Gastrocnemius medialis (tissue), 4 donors: ENCODE measurements at regions of chr17 and their contacts with region 1.

Region 1: DNA sequence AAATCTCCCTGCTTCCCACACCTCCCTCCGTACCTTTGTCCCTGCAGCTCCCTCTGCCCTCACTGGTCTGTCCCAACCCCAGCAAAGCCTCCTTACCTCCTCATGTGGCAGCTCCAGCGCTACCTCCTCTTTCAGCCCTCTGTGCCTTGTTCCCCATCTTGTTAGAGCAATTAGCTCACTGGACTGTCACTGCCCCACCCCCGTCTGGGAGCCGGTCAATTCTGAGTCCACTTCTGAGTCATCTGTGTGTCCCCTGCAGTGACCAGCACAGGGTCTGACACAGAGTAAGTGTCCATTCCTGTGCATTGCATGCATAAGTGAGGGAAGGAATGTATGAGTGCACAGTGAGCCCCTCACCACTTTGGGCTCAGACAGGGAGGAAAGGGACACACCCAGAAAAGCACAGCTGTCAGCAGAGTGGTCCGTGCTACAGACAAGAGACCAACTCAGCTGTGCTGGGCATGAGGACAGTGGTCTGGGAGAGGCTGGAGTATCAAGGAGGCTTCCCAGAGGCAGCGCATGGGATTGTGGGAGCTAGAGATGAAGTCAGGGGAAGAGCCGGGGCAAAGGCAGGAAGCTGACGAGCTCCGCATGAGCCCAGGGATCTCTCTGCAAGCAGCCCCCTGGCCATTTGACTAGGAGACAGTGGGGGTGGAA is 45.9 kb downstream of the PITPNM3 start:
- DNase-seq: no peak
- ATAC-seq: no peak
- H3K4me3 ChIP-seq: no peak overlapping the region
- H3K27ac ChIP-seq: no peak overlapping the region
- H3K4me1 ChIP-seq: no peaks in the 10 kb centered on the region
- H3K27me3 ChIP-seq: peaks cover 0 to 14% (median 4%) of the 10 kb centered on the region in 3 donors
- CTCF ChIP-seq: no peak
- POLR2A ChIP-seq: no peak

Region 2: DNA sequence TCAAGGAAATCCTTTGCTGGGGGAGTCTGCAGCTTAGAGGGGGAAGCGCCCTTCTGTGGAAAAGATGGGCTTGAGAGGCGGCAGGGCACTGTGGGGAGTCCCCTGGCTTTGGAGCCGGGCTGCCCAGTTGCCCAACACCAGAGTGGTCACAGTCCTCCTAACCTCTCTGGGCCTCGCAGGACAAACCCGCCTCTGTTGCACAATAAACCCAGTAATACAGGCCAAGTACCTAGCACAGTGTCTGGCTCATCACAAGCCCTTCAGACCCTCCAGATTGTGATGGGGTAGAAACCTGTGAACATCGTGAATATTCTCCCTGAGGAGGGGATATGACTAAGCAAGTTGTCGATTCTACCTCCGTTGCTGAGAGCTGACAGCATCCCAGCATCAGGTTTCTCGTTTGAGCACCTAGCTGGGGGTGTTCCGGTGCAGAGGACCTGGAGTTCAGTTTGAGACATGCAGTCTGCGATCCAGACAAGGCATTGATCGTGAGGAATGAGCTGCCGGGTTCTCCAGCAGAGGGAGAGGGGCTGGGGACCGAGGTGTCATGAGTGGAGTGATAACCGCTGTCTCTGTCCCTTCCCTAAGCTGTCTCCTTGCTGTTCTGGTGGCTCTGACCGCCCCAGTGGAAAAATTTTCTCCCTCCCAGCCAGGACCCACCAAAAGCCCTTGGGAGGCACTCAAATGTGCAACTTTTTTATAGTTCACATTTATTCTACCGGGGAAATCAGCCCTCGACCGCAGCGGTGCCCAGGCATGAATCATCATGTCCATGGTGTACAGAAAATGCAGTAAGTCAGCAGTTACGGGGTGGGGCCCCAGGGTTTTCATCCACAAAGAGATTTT is 278.3 kb before region 1 on chr17:
- in situ Hi-C with region 1: no loop called
- intact Hi-C with region 1: loop called (anchors 10 kb)
- DNase-seq: no peak
- ATAC-seq: no peak
- H3K4me3 ChIP-seq: no peak overlapping the region
- H3K27ac ChIP-seq: no peak overlapping the region
- H3K4me1 ChIP-seq: no peaks in the 10 kb centered on the region
- H3K27me3 ChIP-seq: peaks cover 0 to 8% (median 0%) of the 10 kb centered on the region in 3 donors
- CTCF ChIP-seq: no peak
- POLR2A ChIP-seq: no peak

Region 3: GRCh38 chr17:6523330-6523729 is 12.9 kb after region 1 on chr17:
- in situ Hi-C with region 1: no loop called
- intact Hi-C with region 1: no loop called
- DNase-seq: no peak
- ATAC-seq: no peak
- H3K4me3 ChIP-seq: no peak overlapping the region
- H3K27ac ChIP-seq: no peak overlapping the region
- H3K4me1 ChIP-seq: no peaks in the 10 kb centered on the region
- H3K27me3 ChIP-seq: no peaks in the 10 kb centered on the region
- CTCF ChIP-seq: no peak
- POLR2A ChIP-seq: no peak